ENCODE measurements at regions of chr7 and their contacts with region 1.

Region 1: DNA sequence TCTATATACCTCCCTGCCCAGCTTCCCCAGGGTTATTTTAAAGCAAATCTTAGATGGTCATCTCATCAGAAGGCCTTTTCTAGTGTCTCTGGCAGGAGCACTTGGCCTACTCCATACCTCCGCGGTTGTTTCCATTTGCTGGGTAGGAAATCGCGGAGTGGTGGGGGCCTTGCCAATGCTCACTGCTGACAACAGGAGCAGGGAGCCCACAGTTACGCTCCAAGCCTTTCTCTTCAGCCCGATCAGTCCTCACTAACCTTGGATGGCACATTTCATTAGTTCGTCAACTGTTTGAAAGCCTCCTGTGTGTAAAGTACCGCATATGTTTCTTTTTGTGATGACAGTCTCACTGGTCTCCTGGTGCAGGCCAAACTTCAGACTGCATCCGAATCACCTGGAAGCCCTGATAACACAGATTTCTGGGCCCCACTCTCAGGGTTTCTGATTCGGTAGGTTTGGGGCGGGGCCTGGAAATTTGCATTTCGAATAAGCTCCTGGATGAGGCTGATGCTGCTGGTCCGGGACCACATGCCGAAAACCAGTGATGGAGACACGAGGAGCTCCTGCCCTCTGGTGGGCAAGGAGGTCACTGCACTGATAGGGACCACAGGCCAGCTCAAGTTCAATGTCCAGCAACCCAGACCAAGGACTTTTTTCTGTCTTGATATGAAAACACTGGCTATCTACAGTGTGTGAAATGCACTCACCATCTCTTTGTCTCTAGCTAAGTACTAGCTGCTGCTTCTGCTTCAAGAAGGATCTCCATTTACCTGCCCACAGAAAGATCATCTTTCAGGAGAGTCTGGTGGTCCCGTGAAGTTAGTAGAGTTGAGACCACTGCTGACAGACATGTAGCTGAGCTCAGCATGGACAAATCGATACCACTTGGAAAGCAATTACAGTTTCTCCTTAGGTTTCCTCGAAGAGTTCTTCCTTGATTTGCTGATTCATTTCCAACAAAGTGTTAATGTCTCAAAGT is 14.0 kb downstream of the LRGUK start:
- DNase-seq: peak; percentile 32
- ATAC-seq: peak; percentile 89
- H3K4me3 Mint-ChIP-seq: no peak overlapping the region
- H3K27ac Mint-ChIP-seq: no peak overlapping the region
- H3K4me1 Mint-ChIP-seq: peaks cover 4% of the 10 kb centered on the region
- H3K27me3 Mint-ChIP-seq: no peaks in the 10 kb centered on the region
- CTCF ChIP-seq: no peak

Region 2: GRCh38 chr7:134101716-134102115 is 39.5 kb before region 1 on chr7:
- CTCF ChIA-PET with region 1: no interaction called
- POLR2A ChIA-PET with region 1: no interaction called
- intact Hi-C with region 1: no loop called
- DNase-seq: no peak
- ATAC-seq: no peak
- H3K4me3 Mint-ChIP-seq: no peak overlapping the region
- H3K27ac Mint-ChIP-seq: no peak overlapping the region
- H3K4me1 Mint-ChIP-seq: peaks cover 1% of the 10 kb centered on the region
- H3K27me3 Mint-ChIP-seq: no peaks in the 10 kb centered on the region
- CTCF ChIP-seq: no peak

Region 3: DNA sequence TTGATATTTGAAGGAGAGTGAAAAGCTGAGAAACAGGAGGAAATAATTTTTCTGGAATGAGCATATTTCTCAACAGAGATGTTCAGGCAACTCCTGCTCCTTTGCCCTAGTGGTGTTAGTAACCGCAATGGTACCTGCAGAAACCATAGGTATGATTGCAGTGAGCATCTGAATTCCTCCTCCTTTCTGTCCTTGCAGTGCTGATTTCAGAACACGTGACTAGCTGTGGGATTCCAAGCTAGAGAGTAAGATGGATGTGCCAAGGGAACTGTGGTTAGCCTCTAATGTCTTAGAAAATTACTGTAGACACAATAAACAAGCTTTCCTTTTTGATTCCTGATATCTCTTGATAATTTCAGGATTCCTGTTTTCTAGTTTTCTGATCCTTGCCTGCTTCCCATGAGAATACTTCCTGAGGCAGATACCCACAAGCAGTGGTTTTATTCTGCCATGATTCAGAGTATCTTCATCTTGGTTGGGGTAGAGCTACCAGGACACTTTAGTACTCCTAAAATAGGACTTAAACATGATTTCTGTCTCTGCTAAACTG is 13.5 kb after region 1 on chr7:
- CTCF ChIA-PET with region 1: interaction called, 11 read pairs
- POLR2A ChIA-PET with region 1: no interaction called
- intact Hi-C with region 1: no loop called
- DNase-seq: no peak
- ATAC-seq: no peak
- H3K4me3 Mint-ChIP-seq: no peak overlapping the region
- H3K27ac Mint-ChIP-seq: no peak overlapping the region
- H3K4me1 Mint-ChIP-seq: no peaks in the 10 kb centered on the region
- H3K27me3 Mint-ChIP-seq: peaks cover 2% of the 10 kb centered on the region
- CTCF ChIP-seq: no peak

Region 4: DNA sequence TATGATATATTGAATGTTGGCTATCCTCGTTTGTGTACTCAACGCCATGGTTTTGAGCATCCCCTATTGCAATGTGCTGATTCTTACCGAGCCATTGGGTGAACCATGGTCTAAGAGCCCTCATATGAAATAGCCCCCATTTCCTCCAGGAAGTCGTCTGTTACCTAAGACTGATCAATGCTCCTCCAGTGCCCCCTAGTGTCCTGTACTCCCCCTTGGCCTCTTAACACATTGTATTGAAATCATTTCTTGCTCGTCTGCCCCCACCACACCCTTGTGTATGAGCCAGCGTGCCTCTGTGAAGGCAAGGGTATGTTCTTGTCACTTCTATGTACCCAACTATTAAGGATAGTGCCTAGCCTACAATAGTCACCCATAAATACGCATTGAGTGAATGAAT is 186.7 kb after region 1 on chr7:
- CTCF ChIA-PET with region 1: no interaction called
- POLR2A ChIA-PET with region 1: no interaction called
- intact Hi-C with region 1: loop called (anchors 1 kb)
- DNase-seq: peak; percentile 17
- ATAC-seq: peak; percentile 85
- H3K4me3 Mint-ChIP-seq: no peak overlapping the region
- H3K27ac Mint-ChIP-seq: no peak overlapping the region
- H3K4me1 Mint-ChIP-seq: no peaks in the 10 kb centered on the region
- H3K27me3 Mint-ChIP-seq: peaks cover 10% of the 10 kb centered on the region
- CTCF ChIP-seq: no peak

Region 5: GRCh38 chr7:134355927-134356326 is 214.7 kb after region 1 on chr7:
- CTCF ChIA-PET with region 1: interaction called, 6 read pairs
- POLR2A ChIA-PET with region 1: no interaction called
- intact Hi-C with region 1: loop called (anchors 1 kb)
- DNase-seq: no peak
- ATAC-seq: no peak
- H3K4me3 Mint-ChIP-seq: no peak overlapping the region
- H3K27ac Mint-ChIP-seq: no peak overlapping the region
- H3K4me1 Mint-ChIP-seq: no peaks in the 10 kb centered on the region
- H3K27me3 Mint-ChIP-seq: peaks cover 11% of the 10 kb centered on the region
- CTCF ChIP-seq: no peak

Measured in activated B cell treated with CpG ODN at 0.5 μM for 24 hours (primary cell).